ENCODE measurements at regions of chr9 and their contacts with region 1.

Region 1: GRCh38 chr9:115008536-115009270 is 78.3 kb upstream of the TNFSF8 start:
- DNase-seq: no peak
- H3K4me3 Mint-ChIP-seq: no peak overlapping the region
- H3K27ac Mint-ChIP-seq: no peak overlapping the region
- H3K4me1 Mint-ChIP-seq: peaks cover 65% of the 10 kb centered on the region
- H3K27me3 Mint-ChIP-seq: peaks cover 2% of the 10 kb centered on the region

Region 2: GRCh38 chr9:114906908-114907571 is 101.7 kb before region 1 on chr9:
- intact Hi-C with region 1: loop called (anchors 2 kb)
- DNase-seq: no peak
- H3K4me3 Mint-ChIP-seq: no peak overlapping the region
- H3K27ac Mint-ChIP-seq: peak overlapping the region; percentile 94
- H3K4me1 Mint-ChIP-seq: peaks cover 84% of the 10 kb centered on the region
- H3K27me3 Mint-ChIP-seq: no peaks in the 10 kb centered on the region

Region 3: DNA sequence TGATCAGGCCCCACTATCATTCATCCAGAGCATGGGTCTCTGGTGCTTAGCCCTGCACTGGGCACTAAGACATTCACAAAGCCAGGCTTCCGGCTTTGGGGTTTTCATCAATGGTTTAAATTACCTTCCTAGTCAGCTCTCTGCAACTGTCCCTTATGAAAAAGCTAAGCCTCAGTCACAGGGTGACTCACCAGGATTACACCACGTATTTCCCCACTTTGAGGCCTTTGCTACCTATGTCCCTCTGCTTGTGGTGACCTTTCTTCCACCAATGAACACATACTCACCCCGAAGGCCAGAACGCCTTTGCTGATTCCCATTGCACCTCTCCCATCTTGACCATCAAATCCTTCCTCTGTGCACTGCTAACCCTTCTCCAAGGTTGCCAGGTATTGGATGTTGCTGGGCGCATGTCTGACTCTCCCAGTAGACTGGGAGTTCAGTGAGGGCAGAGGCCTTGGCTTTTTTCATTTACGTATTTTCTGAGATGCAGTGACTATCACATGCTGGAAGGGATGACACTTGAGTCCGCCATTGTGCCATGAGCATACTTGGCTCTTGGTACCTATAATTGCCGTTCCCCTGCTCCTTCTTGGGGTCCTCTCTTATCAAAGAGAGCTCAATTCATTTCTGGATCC is 19.6 kb before region 1 on chr9:
- intact Hi-C with region 1: loop called (anchors 1 kb)
- DNase-seq: no peak
- H3K4me3 Mint-ChIP-seq: no peak overlapping the region
- H3K27ac Mint-ChIP-seq: peak overlapping the region; percentile 97
- H3K4me1 Mint-ChIP-seq: peaks cover 59% of the 10 kb centered on the region
- H3K27me3 Mint-ChIP-seq: no peaks in the 10 kb centered on the region

Region 4: DNA sequence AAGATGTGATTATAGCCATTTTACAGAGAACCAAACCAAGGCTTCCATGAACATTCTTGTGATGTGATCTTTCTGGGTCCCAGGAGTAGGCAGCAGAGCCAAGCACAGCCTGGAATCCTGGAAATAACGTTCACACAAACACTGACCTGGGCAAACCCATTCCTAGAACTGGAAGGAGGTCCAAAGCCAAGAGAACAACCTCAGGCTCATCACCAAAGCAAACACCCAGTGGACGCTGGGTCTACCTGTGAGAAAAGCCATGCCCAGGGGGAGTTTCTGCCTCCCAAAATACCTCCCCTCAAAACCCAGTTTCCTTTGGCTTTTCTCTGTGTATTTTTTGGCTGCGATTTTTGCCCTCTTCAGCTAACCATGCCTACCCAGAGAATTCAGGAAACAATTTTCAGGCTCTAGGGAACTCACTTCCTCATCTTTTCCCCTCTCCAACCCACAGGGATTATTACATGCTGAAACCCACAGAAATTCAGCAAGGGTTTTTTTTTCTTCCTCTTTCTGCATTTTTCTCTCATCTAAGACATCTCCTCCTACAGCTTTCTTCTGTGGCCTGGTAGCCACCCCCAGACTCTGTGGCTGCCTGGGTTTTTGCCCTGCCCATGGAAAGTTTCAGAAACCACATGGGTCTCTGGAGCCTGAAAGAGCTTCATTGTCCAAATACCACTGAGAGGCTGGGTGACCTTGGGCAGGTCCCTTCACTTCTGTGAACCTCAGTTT is 34.2 kb after region 1 on chr9:
- intact Hi-C with region 1: loop called (anchors 5 kb)
- DNase-seq: no peak
- H3K4me3 Mint-ChIP-seq: no peak overlapping the region
- H3K27ac Mint-ChIP-seq: peak overlapping the region; percentile 24
- H3K4me1 Mint-ChIP-seq: peaks cover 36% of the 10 kb centered on the region
- H3K27me3 Mint-ChIP-seq: peaks cover 19% of the 10 kb centered on the region

Region 5: GRCh38 chr9:115063058-115063845 is 54.5 kb after region 1 on chr9:
- intact Hi-C with region 1: no loop called
- DNase-seq: no peak
- H3K4me3 Mint-ChIP-seq: no peak overlapping the region
- H3K27ac Mint-ChIP-seq: no peak overlapping the region
- H3K4me1 Mint-ChIP-seq: peaks cover 9% of the 10 kb centered on the region
- H3K27me3 Mint-ChIP-seq: peaks cover 21% of the 10 kb centered on the region

Region 6: DNA sequence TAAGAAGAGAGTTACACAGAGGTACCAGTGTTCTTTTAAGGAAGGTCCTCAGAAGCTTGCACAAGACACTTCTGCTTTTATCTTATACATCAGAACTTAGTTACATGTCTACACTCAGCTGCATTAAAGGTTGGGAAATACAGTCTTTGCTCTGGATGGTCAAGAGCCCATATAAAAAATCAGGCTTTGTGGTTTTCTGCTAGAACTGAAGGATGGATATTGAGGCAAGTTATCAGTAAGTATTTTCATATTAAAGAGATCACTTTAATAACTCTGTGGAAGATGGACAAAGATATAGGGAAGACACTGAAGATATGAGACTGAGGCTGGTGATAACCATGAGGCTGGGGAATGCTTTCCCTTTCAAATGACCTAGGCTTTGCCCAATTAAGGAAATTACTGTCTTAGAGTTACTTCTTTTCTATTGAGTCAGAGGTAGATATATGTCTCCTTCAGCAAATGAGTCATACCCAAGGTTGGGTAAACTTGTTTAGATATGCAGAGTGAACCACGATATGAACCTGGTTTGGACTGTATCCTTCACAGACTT is 196.3 kb after region 1 on chr9:
- intact Hi-C with region 1: loop called (anchors 5 kb)
- DNase-seq: no peak
- H3K4me3 Mint-ChIP-seq: no peak overlapping the region
- H3K27ac Mint-ChIP-seq: no peak overlapping the region
- H3K4me1 Mint-ChIP-seq: peaks cover 40% of the 10 kb centered on the region
- H3K27me3 Mint-ChIP-seq: peaks cover 17% of the 10 kb centered on the region

Measured in activated T-helper 2 cell treated with anti-CD3 and anti-CD28 coated beads, Interferon-gamma antibody, Interleukin-2, Interleukin-4, amounts not matched to agents 10 μg/mL and 5 μg/mL and 100 μg/mL, durations not matched to agents 14 hours and 24 hours and 36 hours (primary cell).